ENCODE measurements at regions of chr11 and their contacts with region 1.

Region 1: DNA sequence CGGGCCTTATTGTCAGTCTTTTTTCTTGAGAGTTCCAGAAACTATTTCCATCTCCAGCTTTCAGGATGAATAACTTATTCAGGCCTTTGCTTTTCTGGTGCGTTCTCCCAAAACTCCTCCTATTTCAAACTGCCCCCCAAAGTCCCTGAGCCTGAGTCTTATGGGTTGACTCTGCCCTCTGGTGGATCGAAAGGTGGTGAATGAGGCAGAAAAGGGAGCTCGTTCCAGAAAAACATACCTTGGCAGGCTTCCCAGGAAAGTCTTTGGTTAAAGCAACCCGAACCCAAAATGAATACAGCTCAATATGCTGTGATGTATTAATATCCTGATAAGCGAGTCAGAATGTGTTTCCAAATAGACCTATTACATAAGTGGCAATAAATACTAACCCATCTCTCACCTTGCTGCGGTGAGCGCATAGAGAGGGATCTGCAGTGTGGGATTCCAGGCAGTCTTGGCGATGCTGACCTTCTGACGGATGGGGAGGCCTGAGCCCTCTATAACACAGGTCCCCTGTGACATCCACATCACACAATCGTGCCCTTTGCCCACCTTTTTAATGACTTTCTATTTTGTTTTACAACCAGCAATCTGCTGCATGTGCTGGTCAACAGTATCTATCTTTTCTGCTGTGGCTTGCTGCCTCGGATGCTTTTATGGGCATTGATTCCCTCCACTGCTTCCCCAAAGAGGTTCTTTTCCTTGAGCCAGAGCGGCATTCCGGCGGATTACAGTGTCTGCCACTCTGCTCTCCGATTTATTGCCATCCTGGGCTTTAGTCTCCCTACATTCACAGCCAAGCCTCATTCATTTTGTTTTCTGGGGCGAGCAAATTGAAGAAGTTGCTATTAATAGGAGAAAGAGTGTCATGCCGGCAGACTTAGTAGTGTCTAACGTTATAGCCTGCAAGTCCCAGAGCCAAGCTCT is 756.8 kb downstream of the NTM start:
- DNase-seq: peak; percentile 23
- ATAC-seq: no peak
- H3K4me3 Mint-ChIP-seq: no peak overlapping the region
- H3K27ac Mint-ChIP-seq: no peak overlapping the region
- H3K4me1 Mint-ChIP-seq: no peaks in the 10 kb centered on the region
- H3K27me3 Mint-ChIP-seq: peaks cover 1% of the 10 kb centered on the region
- CTCF ChIP-seq: peak; percentile 41

Region 2: DNA sequence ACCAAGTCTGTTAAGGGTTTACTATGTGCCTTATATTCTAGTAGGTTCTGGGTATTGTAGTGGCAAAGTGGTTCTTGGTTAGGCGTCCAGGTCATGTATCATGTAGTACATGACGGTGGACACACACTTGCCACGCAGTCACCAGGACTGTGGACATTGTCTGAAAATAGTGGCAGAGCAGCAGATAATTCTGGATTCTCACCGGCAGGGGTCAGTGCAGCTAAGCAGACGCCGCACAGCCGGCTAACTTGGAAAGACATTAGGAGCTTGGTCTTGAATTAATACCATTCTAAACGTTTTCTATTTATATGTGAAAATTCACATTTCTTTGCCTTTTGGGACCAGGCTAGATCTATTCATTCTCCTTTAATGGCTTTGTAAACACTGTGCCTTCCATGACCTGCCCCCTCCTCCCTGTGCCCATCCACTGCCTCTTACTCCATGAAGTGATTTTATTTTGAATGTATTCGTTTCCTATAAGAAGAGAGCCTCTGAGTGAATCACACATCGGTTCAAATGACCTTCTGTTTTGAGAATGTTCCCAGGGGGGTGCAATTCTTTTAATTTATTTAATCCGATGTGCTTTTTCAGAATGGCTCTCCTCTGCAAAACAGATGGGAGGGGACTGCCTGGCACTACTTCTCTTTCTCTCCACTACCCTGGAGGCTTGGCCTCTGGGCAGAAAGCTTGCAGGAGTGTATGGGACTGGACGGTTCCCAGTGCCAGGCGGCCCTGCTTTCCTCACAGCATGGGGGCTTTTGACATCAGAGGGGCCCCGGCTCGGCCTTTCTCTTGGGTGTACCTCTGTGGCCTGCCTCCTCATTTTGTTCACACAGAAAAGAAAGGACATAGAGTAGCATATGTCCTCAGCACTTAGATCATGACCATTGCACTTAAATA is 378.8 kb before region 1 on chr11:
- CTCF ChIA-PET with region 1: interaction called, 17 read pairs
- POLR2A ChIA-PET with region 1: no interaction called
- intact Hi-C with region 1: loop called (anchors 5 kb)
- DNase-seq: peak; percentile 60
- ATAC-seq: peak; percentile 30
- H3K4me3 Mint-ChIP-seq: no peak overlapping the region
- H3K27ac Mint-ChIP-seq: no peak overlapping the region
- H3K4me1 Mint-ChIP-seq: no peaks in the 10 kb centered on the region
- H3K27me3 Mint-ChIP-seq: no peaks in the 10 kb centered on the region
- CTCF ChIP-seq: peak; percentile 63

Region 3: GRCh38 chr11:131867457-131868257 is 259.6 kb before region 1 on chr11:
- CTCF ChIA-PET with region 1: interaction called, 20 read pairs
- POLR2A ChIA-PET with region 1: no interaction called
- intact Hi-C with region 1: no loop called
- DNase-seq: peak; percentile 38
- ATAC-seq: no peak
- H3K4me3 Mint-ChIP-seq: no peak overlapping the region
- H3K27ac Mint-ChIP-seq: no peak overlapping the region
- H3K4me1 Mint-ChIP-seq: no peaks in the 10 kb centered on the region
- H3K27me3 Mint-ChIP-seq: peaks cover 2% of the 10 kb centered on the region
- CTCF ChIP-seq: no peak

Measured in activated CD8-positive, alpha-beta T cell treated with anti-CD3 and anti-CD28 coated beads for 36 hours (primary cell).